ENCODE measurements at regions of chr10 and their contacts with region 1.

Region 1: DNA sequence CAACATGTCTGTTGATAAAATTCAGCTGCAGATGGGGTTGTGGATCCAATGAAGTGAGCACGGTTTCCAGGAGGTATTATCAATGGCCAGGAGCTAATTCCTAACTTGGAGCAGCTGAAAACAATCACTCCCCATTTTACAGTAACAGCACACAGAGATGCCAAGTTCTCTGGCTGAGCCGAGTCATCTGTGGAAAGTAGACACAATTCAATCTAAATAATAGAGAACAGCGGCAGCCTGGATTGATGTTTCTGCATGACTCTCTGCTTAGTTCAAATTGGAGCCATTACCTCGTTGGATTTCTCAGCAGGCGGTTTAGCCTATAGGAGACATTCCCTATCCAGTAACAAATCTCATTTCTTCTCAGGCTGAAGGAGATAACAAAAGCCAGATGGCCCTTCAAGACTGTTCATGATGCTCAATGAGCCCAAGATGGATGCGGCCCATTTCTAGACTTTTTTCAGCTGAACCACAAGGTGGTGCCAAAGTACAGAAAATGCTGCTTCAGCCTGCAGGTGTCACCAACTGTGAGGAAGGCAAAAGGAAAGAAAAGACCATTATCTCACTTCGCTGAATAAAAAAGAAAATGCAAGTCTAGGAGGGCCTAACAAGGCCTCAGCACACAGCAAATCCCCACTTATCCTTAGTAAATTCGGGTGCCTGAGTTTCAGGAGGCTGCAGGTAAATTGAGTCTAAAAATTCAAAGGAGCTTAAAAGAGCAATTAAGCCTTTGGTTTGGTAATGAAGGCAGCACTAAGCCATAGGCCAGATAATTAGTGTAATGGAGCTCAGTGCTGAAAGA is 83.7 kb downstream of the SLC16A9 start:
- DNase-seq: no peak
- H3K4me3 ChIP-seq: no peak overlapping the region
- H3K27ac ChIP-seq: no peak overlapping the region
- H3K4me1 ChIP-seq: peaks cover 0 to 7% (median 7%) of the 10 kb centered on the region in 6 donors
- H3K27me3 ChIP-seq: no peaks in the 10 kb centered on the region
- CTCF ChIP-seq: peak; percentile 72 to 92 (median 80)
- POLR2A ChIP-seq: no peak

Region 2: GRCh38 chr10:59240582-59241183 is 385.2 kb before region 1 on chr10:
- intact Hi-C with region 1: loop called (anchors 5 kb)
- DNase-seq: no peak
- H3K4me3 ChIP-seq: no peak overlapping the region
- H3K27ac ChIP-seq: no peak overlapping the region
- H3K4me1 ChIP-seq: no peaks in the 10 kb centered on the region
- H3K27me3 ChIP-seq: no peaks in the 10 kb centered on the region
- CTCF ChIP-seq: peak in 7 of 11 experiments; percentile 31 to 65 (median 43)
- POLR2A ChIP-seq: no peak

Region 3: DNA sequence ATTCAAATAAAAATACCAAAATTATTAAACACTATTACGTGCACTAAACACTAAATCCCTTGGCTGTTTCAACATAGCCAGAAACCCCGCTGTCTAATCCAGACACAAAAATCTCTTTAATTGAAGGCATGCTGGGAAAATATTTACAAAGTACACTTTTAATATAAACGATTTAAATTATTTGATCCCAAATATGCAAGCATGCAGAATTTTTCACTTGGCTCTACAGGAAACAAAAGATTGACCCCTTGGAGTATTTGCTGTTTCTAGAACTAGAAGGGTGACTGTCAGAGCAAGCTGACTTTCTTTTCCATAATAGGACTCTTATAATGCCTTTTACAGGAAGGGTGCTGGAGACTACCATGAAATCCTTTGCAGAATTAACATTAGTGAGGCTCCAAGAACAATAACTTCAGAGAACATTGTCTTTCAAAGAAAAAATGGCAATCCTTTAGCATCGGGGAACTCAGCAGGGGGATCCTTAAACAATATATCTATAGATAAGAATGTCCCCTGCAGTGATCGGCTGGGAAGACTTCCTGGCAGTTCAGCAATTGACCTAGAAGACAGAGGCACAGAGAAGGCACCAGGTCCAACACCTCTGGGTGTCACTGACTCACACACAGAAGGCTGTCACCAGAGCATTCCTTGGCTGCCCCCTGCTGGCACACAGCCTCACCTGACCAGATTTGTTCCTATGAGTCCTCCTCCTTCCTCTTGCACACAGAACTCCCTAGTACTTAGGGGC is 183.1 kb after region 1 on chr10:
- intact Hi-C with region 1: loop called (anchors 5 kb)
- DNase-seq: peak; percentile 88
- H3K4me3 ChIP-seq: no peak overlapping the region
- H3K27ac ChIP-seq: peak overlapping the region in 6 of 8 donors; percentile 14 to 56 (median 28)
- H3K4me1 ChIP-seq: peaks cover 5 to 35% (median 24%) of the 10 kb centered on the region in 6 donors
- H3K27me3 ChIP-seq: no peaks in the 10 kb centered on the region
- CTCF ChIP-seq: peak; percentile 33 to 72 (median 57)
- POLR2A ChIP-seq: no peak

Region 4: DNA sequence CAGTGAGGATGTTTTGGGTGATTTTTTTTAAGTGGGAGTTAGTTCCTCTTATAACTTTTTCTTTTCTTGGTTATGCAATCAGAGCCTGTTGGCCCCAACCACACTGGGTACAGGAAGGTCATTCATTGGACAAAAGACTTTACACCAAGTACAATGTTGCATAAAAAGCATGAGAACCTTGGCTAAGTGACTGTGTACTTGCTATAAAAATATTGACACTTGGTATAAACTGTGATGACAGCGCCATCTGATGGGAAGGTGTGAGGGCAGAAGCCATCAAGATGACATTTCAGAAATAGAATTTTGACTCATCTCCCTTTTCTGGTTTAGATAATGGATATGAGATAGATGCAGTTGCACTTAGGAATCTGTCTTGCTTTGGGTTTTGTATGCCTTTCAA is 406.8 kb after region 1 on chr10:
- intact Hi-C with region 1: loop called (anchors 10 kb)
- DNase-seq: no peak
- H3K4me3 ChIP-seq: no peak overlapping the region
- H3K27ac ChIP-seq: peak overlapping the region in 3 of 8 donors; percentile 34 to 53 (median 50)
- H3K4me1 ChIP-seq: peaks cover 0 to 18% (median 4%) of the 10 kb centered on the region in 6 donors
- H3K27me3 ChIP-seq: no peaks in the 10 kb centered on the region
- CTCF ChIP-seq: peak in 9 of 11 experiments; percentile 8 to 55 (median 49)
- POLR2A ChIP-seq: no peak